SK-N-SH (cell line): ENCODE measurements at regions of chr2 and their contacts with region 1.

Region 1: DNA sequence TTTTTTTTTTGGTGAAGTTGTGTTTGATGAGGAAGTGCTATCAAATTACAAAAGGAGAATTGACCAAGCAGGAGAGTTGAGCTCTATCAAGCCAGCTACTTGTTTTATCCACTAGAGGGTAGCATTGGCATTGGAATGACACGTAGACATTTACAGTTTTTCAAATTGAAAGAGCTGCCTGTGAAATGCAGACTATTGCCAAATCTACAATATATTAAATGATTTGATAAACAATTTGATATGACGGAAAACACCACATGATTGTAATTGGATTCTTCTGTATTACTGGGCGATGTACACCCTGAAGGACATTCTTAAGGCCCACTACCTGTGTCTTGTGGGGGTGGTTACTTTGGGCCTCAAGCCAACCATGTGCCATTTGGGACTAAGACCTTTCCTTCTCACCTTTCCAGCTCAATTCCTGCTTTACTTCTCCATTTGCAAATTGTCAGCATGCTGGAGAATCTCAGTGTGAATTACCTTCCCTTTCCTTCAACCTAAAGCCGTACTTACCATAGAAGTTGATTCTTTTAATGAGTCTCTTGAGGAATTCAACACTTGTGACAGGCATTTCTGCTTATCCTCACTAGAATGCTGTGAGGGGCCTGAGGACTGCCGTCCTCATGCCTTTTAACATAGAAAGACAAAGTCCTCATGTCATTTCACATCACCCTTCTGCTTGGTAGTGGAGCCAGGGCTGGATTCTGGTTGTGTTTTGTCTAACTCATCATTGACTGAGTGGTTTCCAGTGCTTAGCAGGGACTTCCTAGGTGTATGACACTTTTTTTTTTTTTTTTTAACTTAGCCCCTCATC is 134.8 kb upstream of the THUMPD2 start:
- DNase-seq: peak; percentile 57
- H3K4me3 ChIP-seq: no peak overlapping the region; a peak in 1 of 4 replicates
- H3K27ac ChIP-seq: no peak overlapping the region
- H3K4me1 ChIP-seq: no peaks in the 10 kb centered on the region; a peak in 2 of 4 replicates
- H3K27me3 ChIP-seq: no peaks in the 10 kb centered on the region
- CTCF ChIP-seq: peak; percentile 98
- EP300 ChIP-seq: peak in 1 of 2 experiments; percentile 38; a peak in 1 of 4 replicates
- RAD21 ChIP-seq: peak; percentile 100

Region 2: GRCh38 chr2:39902103-39902502 is 11.8 kb before region 1 on chr2:
- CTCF ChIA-PET with region 1: interaction called, 17 read pairs
- POLR2A ChIA-PET with region 1: no interaction called
- DNase-seq: no peak
- H3K4me3 ChIP-seq: no peak overlapping the region
- H3K27ac ChIP-seq: no peak overlapping the region
- H3K4me1 ChIP-seq: no peaks in the 10 kb centered on the region
- H3K27me3 ChIP-seq: no peaks in the 10 kb centered on the region
- CTCF ChIP-seq: no peak
- EP300 ChIP-seq: no peak
- RAD21 ChIP-seq: no peak

Region 3: GRCh38 chr2:40197121-40197520 is 283.3 kb after region 1 on chr2:
- CTCF ChIA-PET with region 1: interaction called, 10 read pairs
- POLR2A ChIA-PET with region 1: no interaction called
- DNase-seq: peak; percentile 9
- H3K4me3 ChIP-seq: no peak overlapping the region; a peak in 1 of 4 replicates
- H3K27ac ChIP-seq: no peak overlapping the region
- H3K4me1 ChIP-seq: peaks cover 4 to 24% of the 10 kb centered on the region in 2 experiments; a peak in 2 of 4 replicates
- H3K27me3 ChIP-seq: no peaks in the 10 kb centered on the region
- CTCF ChIP-seq: no peak
- EP300 ChIP-seq: 0 out of 4 replicates have a peak, but pooled peaks of 1 of the 2 experiments have one; percentile 14
- RAD21 ChIP-seq: peak; percentile 33; the same call in 1 of the 2 replicates

Region 4: DNA sequence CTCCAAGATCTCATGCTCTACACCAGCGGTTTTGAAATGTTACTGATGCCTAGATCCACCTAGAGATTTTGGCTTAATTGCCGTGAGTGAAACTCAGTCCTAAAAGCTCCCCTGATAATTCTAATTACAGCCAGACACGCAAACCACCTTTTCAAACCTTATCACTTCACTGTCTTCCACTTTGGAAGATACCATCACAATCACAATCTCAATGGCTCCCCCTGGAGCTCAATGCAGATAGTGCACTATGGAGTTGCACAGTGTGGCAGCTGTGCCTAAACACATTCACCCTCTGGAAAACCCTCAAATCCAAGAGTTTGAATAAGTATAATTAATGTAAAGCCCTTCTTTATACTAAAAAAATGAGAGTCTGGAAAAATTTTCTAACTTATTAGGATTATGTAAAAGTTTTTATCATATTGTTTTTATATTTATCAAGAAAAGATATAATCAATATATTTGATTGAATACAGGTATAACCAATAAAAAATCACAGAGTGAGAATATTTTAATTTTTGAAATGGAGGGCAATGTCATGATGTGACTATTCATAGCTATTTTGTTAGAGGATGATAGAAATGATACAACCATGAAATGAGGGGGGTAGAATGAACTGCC is 640.9 kb after region 1 on chr2:
- CTCF ChIA-PET with region 1: interaction called, 21 read pairs
- POLR2A ChIA-PET with region 1: no interaction called
- DNase-seq: peak; percentile 32
- H3K4me3 ChIP-seq: no peak overlapping the region; a peak in 1 of 4 replicates
- H3K27ac ChIP-seq: no peak overlapping the region
- H3K4me1 ChIP-seq: peaks cover 0 to 4% of the 10 kb centered on the region in 2 experiments; a peak in 2 of 4 replicates
- H3K27me3 ChIP-seq: no peaks in the 10 kb centered on the region
- CTCF ChIP-seq: peak; percentile 90
- EP300 ChIP-seq: no peak
- RAD21 ChIP-seq: peak; percentile 82

Region 5: GRCh38 chr2:41414486-41415230 is 1500.8 kb after region 1 on chr2:
- CTCF ChIA-PET with region 1: interaction called, 11 read pairs
- POLR2A ChIA-PET with region 1: no interaction called
- DNase-seq: peak; percentile 27
- H3K4me3 ChIP-seq: no peak overlapping the region
- H3K27ac ChIP-seq: no peak overlapping the region
- H3K4me1 ChIP-seq: no peaks in the 10 kb centered on the region
- H3K27me3 ChIP-seq: no peaks in the 10 kb centered on the region
- CTCF ChIP-seq: peak; percentile 73
- EP300 ChIP-seq: no peak
- RAD21 ChIP-seq: peak; percentile 85